ENCODE measurements at regions of chr4 and their contacts with region 1.

Region 1: DNA sequence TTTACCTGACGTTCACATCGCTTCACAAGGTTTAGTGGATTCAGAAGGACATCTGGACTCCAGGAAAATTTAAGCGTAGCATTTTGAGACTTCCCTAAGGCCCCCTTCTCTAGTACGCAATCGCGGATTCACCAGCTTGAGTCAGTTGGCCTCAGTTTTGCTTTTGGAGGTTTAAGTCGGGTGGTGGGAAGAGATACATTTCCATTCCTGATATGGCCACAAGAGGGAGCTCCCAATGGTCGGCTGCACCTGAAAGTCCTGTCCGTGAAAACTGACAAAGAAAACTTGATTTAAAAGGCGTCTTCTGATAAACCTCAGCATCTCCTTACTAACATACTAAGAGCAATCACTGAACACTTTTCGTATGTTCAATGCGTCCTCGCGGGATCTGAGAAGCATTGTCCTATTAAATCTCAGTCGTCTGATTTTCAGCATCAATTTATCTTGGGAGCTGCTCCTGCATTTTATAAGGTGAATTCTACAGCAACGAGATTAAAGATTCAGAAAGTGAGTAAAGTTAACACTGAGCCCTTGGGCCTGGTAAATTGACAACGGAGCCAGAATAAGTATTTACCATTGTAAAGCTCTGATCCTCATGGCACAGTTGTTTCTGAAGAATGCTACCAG is 50.6 kb downstream of the LGI2 start:
- DNase-seq: peak; percentile 62
- ATAC-seq: peak; percentile 53; the same call in 1 of the 2 replicates
- H3K4me3 ChIP-seq: no peak overlapping the region
- H3K27ac ChIP-seq: no peak overlapping the region
- H3K4me1 ChIP-seq: no peaks in the 10 kb centered on the region
- H3K27me3 ChIP-seq: peaks cover 36% of the 10 kb centered on the region
- CTCF ChIP-seq: peak; percentile 77
- POLR2A ChIP-seq: no peak
- RAD21 ChIP-seq: peak; percentile 68

Region 2: DNA sequence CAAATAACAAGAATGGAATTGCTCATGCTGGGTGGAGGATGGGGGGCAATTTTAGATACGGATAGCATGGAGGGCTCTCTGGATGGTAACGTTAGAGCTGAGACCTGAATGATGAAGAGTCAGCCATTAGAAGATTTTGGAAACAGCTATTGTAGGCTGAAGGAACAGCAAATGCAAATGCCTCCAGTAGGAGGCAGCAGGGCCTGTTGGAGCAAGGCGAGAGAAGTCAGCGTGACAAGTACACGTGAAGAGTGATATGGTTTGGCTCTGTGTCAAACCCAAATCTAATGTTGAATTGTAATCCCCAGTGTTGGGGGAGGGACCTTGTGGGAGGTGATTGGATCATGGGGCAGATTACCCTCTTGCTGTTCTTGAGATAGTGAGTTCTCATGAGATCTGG is 244.1 kb before region 1 on chr4:
- CTCF ChIA-PET with region 1: no interaction called
- POLR2A ChIA-PET with region 1: no interaction called
- dilution Hi-C with region 1: no loop called
- in situ Hi-C with region 1: no loop called
- intact Hi-C with region 1: loop called (anchors 10 kb)
- DNase-seq: peak; percentile 20
- ATAC-seq: no peak
- H3K4me3 ChIP-seq: no peak overlapping the region
- H3K27ac ChIP-seq: no peak overlapping the region
- H3K4me1 ChIP-seq: peaks cover 2% of the 10 kb centered on the region; the same call in 1 of the 2 replicates
- H3K27me3 ChIP-seq: 0 out of 2 replicates have a peak, but pooled peaks cover 2% of the 10 kb centered on the region
- CTCF ChIP-seq: peak; percentile 45
- POLR2A ChIP-seq: no peak
- RAD21 ChIP-seq: peak; percentile 58

Region 3: GRCh38 chr4:24924309-24924781 is 55.8 kb before region 1 on chr4:
- CTCF ChIA-PET with region 1: no interaction called
- POLR2A ChIA-PET with region 1: no interaction called
- dilution Hi-C with region 1: no loop called
- in situ Hi-C with region 1: no loop called
- intact Hi-C with region 1: loop called (anchors 5 kb)
- DNase-seq: peak; percentile 97
- ATAC-seq: peak; percentile 89
- H3K4me3 ChIP-seq: no peak overlapping the region
- H3K27ac ChIP-seq: no peak overlapping the region
- H3K4me1 ChIP-seq: peaks cover 2% of the 10 kb centered on the region
- H3K27me3 ChIP-seq: peaks cover 15% of the 10 kb centered on the region
- CTCF ChIP-seq: no peak
- POLR2A ChIP-seq: no peak
- RAD21 ChIP-seq: no peak

Region 4: GRCh38 chr4:25098964-25099891 is 119.1 kb after region 1 on chr4:
- CTCF ChIA-PET with region 1: no interaction called
- POLR2A ChIA-PET with region 1: no interaction called
- dilution Hi-C with region 1: no loop called
- in situ Hi-C with region 1: no loop called
- intact Hi-C with region 1: no loop called
- DNase-seq: peak; percentile 63
- ATAC-seq: peak; percentile 51
- H3K4me3 ChIP-seq: no peak overlapping the region
- H3K27ac ChIP-seq: no peak overlapping the region
- H3K4me1 ChIP-seq: peaks cover 2% of the 10 kb centered on the region; the same call in 1 of the 2 replicates
- H3K27me3 ChIP-seq: peaks cover 15% of the 10 kb centered on the region
- CTCF ChIP-seq: no peak
- POLR2A ChIP-seq: no peak
- RAD21 ChIP-seq: no peak

Region 5: GRCh38 chr4:25144870-25145481 is 164.8 kb after region 1 on chr4:
- CTCF ChIA-PET with region 1: interaction called, 7 read pairs
- POLR2A ChIA-PET with region 1: no interaction called
- dilution Hi-C with region 1: no loop called
- in situ Hi-C with region 1: no loop called
- intact Hi-C with region 1: loop called (anchors 2 kb)
- DNase-seq: peak; percentile 21
- ATAC-seq: no peak
- H3K4me3 ChIP-seq: no peak overlapping the region
- H3K27ac ChIP-seq: no peak overlapping the region
- H3K4me1 ChIP-seq: no peaks in the 10 kb centered on the region
- H3K27me3 ChIP-seq: no peaks in the 10 kb centered on the region
- CTCF ChIP-seq: peak; percentile 57
- POLR2A ChIP-seq: no peak
- RAD21 ChIP-seq: peak; percentile 54

Region 6: GRCh38 chr4:25312496-25313200 is 332.5 kb after region 1 on chr4 and contains the start of gene ZCCHC4:
- CTCF ChIA-PET with region 1: no interaction called
- POLR2A ChIA-PET with region 1: no interaction called
- dilution Hi-C with region 1: no loop called
- in situ Hi-C with region 1: no loop called
- intact Hi-C with region 1: no loop called
- DNase-seq: peak; percentile 90
- ATAC-seq: peak; percentile 100
- H3K4me3 ChIP-seq: peak within 1 kb of the TSS; percentile 79
- H3K27ac ChIP-seq: peak within 1 kb of the TSS; percentile 76
- H3K4me1 ChIP-seq: peaks cover 9% of the 10 kb centered on the region
- H3K27me3 ChIP-seq: no peaks in the 10 kb centered on the region
- CTCF ChIP-seq: peak; percentile 100; the same call in 1 of the 2 replicates
- POLR2A ChIP-seq: peak; percentile 63; the same call in 1 of the 2 replicates
- RAD21 ChIP-seq: peak; percentile 46
- total RNA-seq, gene ZCCHC4: 8.1 and 11.7 TPM in 2 replicates

Region 7: GRCh38 chr4:25367004-25367621 is 386.9 kb after region 1 on chr4:
- CTCF ChIA-PET with region 1: interaction called, 8 read pairs
- POLR2A ChIA-PET with region 1: no interaction called
- dilution Hi-C with region 1: no loop called
- in situ Hi-C with region 1: loop called (anchors 25 kb)
- intact Hi-C with region 1: loop called (anchors 2 kb)
- DNase-seq: peak; percentile 59
- ATAC-seq: peak; percentile 49
- H3K4me3 ChIP-seq: no peak overlapping the region
- H3K27ac ChIP-seq: no peak overlapping the region
- H3K4me1 ChIP-seq: no peaks in the 10 kb centered on the region
- H3K27me3 ChIP-seq: no peaks in the 10 kb centered on the region
- CTCF ChIP-seq: peak; percentile 79
- POLR2A ChIP-seq: no peak
- RAD21 ChIP-seq: peak; percentile 81